Tibial artery (tissue), 4 donors: ENCODE measurements at regions of chr3 and their contacts with region 1.

Region 1: DNA sequence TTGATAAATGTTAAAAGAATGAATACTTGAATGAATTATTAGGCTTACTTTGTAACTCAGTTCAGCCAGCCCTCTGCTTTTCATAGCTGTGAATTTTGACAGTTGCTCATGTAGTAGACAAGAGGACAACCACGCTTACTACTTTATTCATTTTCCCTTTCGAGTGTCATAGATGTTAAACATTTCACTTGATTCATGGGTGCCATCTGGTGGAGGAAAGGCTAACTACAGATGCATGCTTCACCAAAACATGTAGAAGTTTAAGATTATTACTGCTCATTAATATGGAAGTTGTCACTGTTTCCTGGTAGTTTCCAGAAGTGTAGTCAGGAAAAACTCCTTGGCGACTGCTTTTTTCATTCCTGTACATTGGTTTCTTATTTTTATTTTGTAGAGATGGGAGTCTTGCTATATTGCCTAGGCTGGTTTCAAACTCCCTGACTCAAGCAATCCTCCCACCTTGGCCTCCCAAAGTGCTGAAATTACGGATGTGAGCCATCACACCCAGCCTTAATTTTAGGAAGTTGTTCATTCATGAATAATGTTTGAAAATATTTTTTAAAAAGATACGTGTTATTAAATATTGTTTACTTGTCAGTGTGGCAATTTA is 163.2 kb downstream of the B3GALNT1 start:
- DNase-seq: peak in 1 of 2 donors; percentile 86
- H3K4me3 ChIP-seq: no peak overlapping the region
- H3K27ac ChIP-seq: no peak overlapping the region
- H3K4me1 ChIP-seq: no peaks in the 10 kb centered on the region
- H3K27me3 ChIP-seq: no peaks in the 10 kb centered on the region
- CTCF ChIP-seq: peak; percentile 92 to 95

Region 2: DNA sequence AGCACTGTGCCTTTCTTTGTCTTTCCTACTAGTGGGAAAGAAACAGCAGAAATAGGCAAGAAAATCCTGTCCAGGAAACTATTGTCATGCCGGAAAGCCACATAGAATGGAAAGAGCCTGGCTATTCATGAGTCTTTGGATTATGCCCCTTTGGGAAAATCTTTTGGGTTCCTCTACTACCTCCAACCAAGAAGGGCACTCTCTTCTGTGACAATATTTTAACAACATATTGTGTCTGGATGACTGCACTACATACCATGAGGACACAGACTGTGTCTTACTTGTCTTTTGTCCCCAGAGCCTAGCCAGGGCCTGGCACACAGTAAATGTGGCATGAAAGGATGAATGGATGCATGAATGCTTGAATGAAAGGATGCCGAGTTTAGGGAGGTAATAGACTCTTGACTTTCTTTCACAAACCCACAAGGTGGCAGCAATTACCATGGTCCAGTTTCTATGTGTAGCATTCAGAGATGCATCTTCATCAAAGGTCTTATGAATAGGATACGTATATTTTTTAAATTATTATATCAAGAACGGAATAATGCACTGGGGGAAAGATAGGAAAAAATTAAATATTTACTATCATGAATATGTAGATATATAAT is 234.7 kb before region 1 on chr3:
- intact Hi-C with region 1: loop called (anchors 2 kb)
- DNase-seq: no peak
- H3K4me3 ChIP-seq: no peak overlapping the region
- H3K27ac ChIP-seq: no peak overlapping the region
- H3K4me1 ChIP-seq: peaks cover 0 to 5% (median 0%) of the 10 kb centered on the region in 4 donors
- H3K27me3 ChIP-seq: peaks cover 0 to 3% of the 10 kb centered on the region in 2 donors
- CTCF ChIP-seq: peak; percentile 69 to 71

Region 3: GRCh38 chr3:160754855-160755747 is 186.9 kb before region 1 on chr3:
- intact Hi-C with region 1: loop called (anchors 5 kb)
- DNase-seq: peak; percentile 92 to 97
- H3K4me3 ChIP-seq: peak overlapping the region; percentile 75 to 83
- H3K27ac ChIP-seq: peak overlapping the region; percentile 95 to 98
- H3K4me1 ChIP-seq: peaks cover 0 to 41% (median 17%) of the 10 kb centered on the region in 4 donors
- H3K27me3 ChIP-seq: no peaks in the 10 kb centered on the region
- CTCF ChIP-seq: peak in 1 of 2 experiments; percentile 4